Heart right ventricle (tissue), 16 donors: ENCODE measurements at regions of chr4 and their contacts with region 1.

Region 1: DNA sequence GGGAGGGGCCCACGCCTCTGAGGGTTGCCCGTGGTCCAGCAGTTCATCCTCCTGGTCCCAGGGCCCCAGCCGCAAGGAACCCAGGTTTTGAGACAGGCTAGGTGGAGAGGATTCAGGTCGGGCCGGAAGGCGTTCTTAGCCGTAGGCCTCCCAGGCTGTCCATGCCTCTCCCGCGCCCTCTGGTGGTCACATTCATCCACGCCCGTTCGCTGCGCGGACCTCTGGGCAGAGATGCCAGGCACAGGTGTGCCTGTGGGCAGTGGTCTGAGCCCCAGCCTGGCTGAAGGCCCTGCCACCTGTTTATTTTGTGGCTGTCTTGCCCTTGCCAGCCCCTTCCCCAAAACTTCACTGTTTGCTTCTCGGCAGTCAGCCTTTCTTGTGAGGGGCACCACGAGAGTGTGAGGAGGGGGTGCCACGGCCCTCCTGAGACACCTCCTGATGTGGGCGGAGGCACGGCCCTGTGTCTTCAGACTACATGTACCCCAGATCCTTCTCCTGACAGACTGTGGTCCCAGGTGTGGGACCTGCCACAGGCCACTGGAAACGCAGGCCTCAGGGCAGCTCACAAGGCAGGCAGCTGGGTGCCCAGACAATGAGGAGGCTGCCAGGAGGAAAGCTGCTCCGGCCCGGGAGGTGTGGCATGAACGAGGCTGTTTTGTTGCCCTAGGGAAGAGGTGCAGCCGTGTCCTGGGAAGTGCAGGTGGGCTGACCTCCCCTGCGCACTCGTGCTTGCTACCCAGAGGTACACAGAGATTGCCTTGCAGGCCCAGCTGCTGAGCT is 5.0 kb downstream of the UVSSA start:
- DNase-seq: peak; percentile 81 to 86
- ATAC-seq: peak in 5 of 8 donors; percentile 15 to 43 (median 37)
- H3K4me3 ChIP-seq: no peak overlapping the region
- H3K27ac ChIP-seq: peak overlapping the region in 2 of 10 donors; percentile 26 to 36
- H3K4me1 ChIP-seq: peaks cover 0 to 24% (median 13%) of the 10 kb centered on the region in 9 donors
- H3K27me3 ChIP-seq: no peaks in the 10 kb centered on the region
- CTCF ChIP-seq: peak; percentile 87 to 99 (median 94)

Region 2: DNA sequence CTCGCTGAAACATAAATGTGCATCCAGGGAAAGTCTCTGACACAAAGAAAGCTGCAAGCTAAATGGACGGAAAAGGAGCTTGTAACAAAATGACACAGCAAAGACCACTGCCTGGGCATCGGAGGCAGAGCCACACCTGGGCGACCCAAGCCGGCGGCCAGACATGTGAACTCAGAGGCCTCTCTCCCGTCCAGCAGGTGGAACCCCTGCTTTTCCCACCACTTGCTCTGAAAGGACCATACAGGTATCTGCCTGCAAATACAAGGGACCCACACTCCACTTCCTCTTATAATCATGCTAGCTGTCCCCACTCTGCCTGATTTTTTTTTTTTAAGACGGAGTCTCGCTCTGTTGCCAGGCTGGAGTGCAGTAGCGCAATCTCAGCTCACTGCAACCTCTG is 538.1 kb before region 1 on chr4:
- intact Hi-C with region 1: no loop called
- DNase-seq: no peak
- ATAC-seq: peak in 1 of 8 donors; percentile 31
- H3K4me3 ChIP-seq: no peak overlapping the region
- H3K27ac ChIP-seq: no peak overlapping the region
- H3K4me1 ChIP-seq: peaks cover 0 to 2% (median 0%) of the 10 kb centered on the region in 9 donors
- H3K27me3 ChIP-seq: peaks cover 0 to 72% (median 55%) of the 10 kb centered on the region in 7 donors
- CTCF ChIP-seq: peak in 3 of 9 donors; percentile 7 to 17 (median 12)

Region 3: DNA sequence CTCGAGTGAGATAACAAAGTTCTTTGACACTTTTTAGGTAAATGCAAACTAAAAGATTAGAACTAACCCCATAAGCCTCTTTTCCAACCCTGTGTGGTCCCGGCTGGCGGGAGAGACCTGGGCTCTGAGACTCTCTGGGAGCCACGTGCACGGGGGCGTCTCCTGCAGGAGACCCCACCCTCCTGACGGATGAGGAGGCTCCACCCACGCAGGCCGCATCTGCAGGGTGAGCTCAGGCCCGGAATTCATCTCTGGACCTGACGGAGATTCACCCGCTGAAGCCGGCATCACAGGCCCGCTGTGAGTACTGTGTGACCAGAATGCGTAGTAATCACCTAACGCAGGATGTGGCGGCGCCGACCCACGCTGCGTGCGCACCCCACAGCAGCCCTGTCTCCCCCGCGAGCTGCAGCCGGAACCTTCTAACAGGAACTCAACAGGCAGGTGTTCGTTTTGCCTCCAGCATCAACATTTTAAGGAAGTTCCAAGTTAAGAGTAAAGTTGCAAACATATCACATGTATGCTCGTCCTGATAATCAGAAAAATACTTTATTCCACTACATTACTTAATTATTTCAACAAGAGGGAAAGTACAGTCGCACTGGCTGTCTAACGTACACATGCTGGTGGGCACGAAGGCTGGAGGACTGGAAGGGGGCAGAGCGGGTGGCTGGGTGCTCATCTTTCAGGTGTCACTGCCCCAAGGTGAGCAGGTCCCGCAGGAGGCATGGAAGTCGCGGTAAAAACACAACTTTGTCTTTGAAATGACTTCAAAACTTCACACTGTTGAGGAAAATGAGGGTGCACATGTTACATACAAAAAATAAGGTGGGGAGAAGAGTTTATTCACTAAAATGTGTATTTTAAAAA is 296.1 kb before region 1 on chr4:
- intact Hi-C with region 1: no loop called
- DNase-seq: no peak
- ATAC-seq: peak; percentile 18 to 62 (median 40)
- H3K4me3 ChIP-seq: peak overlapping the region in 7 of 10 donors; percentile 22 to 43 (median 34)
- H3K27ac ChIP-seq: peak overlapping the region in 1 of 10 donors; percentile 56
- H3K4me1 ChIP-seq: peaks cover 0 to 22% (median 9%) of the 10 kb centered on the region in 9 donors
- H3K27me3 ChIP-seq: peaks cover 0 to 73% (median 52%) of the 10 kb centered on the region in 7 donors
- CTCF ChIP-seq: no peak

Region 4: DNA sequence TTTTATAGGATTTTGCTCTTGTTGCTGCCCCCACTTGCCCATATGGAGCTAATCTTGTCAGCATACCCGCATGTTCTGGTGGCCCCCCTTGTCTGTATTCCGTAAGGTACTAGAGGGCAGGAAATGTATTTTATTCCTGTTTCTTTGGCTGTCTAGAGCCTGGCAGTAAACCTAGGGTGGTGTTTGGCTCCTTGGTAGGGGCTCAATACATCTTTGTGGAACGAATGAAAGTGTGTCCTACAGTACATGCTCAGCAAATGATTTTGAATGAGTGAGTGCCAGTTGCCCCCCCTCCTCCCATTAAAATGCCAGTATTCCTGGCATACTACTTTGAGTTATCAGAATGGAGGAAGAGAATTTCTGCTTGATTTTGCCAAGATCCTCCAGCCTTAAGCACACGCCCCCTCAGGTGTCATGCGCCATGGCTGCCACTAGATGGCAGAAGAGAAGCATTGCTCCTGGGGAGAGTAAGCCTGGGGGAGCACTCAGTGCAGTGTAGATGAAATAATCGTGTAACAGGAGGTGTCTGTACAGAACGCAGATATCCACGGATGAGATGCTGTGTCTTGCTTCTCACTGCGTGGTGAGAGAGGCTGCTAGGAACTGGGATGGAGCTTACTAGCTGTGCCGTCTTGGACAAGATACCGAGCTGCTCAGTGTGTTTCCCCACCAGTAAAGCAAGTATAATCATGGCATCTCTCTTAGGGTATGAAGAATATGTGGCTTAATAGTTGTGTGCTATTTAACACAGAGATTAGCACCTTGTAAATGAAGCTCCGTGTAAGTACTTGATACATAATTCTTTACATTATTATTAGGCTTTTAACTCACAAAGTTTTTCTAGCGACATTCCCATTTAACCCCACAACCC is 221.5 kb before region 1 on chr4:
- intact Hi-C with region 1: loop called (anchors 1 to 10 kb)
- DNase-seq: peak; percentile 49 to 56
- ATAC-seq: peak; percentile 90 to 96 (median 95)
- H3K4me3 ChIP-seq: no peak overlapping the region
- H3K27ac ChIP-seq: no peak overlapping the region
- H3K4me1 ChIP-seq: peaks cover 0 to 6% (median 0%) of the 10 kb centered on the region in 9 donors
- H3K27me3 ChIP-seq: peaks cover 0 to 24% (median 5%) of the 10 kb centered on the region in 7 donors
- CTCF ChIP-seq: peak; percentile 97 to 100 (median 99)

Region 5: DNA sequence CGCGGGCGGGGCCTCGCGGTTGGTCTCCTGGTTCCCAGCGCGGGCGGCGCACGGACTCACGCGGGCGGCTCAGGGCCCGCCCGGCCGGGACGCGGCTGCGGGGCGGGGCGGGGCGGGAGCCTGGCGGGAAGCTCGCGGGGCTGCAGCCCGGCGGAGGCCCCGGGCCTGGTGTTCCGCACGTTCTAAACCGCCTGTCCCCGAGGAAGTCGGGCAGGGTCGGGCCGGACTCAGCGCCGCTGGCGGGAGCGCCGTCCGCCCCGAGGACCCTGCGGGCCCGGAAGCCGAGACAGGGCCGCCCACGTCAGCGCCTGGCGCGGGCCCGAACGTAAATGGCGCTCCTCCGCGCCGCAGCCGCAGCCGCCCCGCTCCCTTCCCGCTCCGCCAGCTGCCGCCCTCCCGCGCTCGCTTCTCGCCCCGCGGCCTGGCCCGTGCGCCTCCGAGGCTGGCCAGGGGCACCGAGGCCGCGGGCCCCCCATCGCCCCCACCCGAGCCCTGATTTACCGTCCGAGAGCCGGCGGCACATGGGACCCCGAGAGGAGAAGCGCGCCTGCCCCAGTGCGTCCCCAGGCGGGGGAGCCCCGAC is 102.8 kb before region 1 on chr4:
- intact Hi-C with region 1: loop called in 7 of 10 experiments (anchors 2 to 10 kb)
- DNase-seq: peak; percentile 85 to 89
- ATAC-seq: peak; percentile 40 to 75 (median 66)
- H3K4me3 ChIP-seq: peak overlapping the region; percentile 45 to 86 (median 78)
- H3K27ac ChIP-seq: peak overlapping the region; percentile 91 to 99 (median 98)
- H3K4me1 ChIP-seq: peaks cover 43 to 60% (median 51%) of the 10 kb centered on the region in 9 donors
- H3K27me3 ChIP-seq: no peaks in the 10 kb centered on the region
- CTCF ChIP-seq: peak in 1 of 9 donors; percentile 17

Region 6: DNA sequence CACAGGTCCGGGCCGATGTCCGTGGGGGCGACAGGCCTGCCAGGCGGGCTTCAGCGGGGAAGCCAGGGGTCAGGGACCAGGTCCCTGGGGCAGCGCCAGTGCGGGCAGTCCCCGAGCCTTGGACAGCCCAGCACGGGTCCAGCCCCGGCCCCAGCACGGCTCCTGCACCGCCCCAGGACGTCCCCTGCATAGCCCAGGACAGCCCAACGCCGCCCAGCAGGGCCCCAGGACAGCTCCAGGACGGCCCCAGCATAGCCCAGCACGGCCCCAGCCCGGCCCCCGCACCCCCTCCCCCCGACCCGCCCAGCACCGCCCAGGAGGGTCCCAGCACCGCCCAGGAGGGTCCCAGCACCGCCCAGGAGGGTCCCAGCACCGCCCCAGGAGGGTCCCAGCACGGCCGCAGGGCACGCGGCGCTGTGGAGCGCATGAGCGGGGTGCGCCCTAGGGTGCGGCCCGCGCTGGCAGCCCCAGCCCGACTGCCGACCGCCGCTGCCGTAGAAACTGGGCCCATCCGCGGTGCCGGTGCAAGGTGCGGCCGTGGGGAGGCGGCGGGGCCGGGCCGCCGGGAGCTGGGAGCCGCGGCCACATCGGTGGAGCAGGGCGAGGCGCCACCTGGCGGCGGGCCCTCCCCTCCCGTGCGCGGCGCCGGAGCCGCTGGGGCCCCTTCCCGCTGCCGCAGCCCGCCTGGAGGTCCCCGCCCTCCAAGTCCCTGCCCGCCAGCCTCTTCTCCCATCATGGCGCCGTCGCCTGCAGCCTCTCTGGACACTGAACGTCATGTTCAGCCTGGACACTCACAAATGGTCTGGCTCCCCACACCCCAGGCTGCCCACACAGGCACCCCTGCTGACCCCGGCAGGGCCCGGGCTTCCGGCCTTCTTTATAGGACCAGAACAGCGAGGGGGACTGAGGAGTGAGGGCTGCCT is 161.0 kb after region 1 on chr4:
- intact Hi-C with region 1: loop called in 7 of 10 experiments (anchors 2 to 10 kb)
- DNase-seq: peak in 1 of 2 donors; percentile 49
- ATAC-seq: peak; percentile 43 to 79 (median 76)
- H3K4me3 ChIP-seq: peak overlapping the region in 8 of 10 donors; percentile 6 to 34 (median 21)
- H3K27ac ChIP-seq: peak overlapping the region in 1 of 10 donors; percentile 18
- H3K4me1 ChIP-seq: peaks cover 0 to 8% (median 0%) of the 10 kb centered on the region in 9 donors
- H3K27me3 ChIP-seq: peaks cover 5 to 72% (median 52%) of the 10 kb centered on the region in 7 donors
- CTCF ChIP-seq: peak; percentile 48 to 74 (median 64)

Region 7: DNA sequence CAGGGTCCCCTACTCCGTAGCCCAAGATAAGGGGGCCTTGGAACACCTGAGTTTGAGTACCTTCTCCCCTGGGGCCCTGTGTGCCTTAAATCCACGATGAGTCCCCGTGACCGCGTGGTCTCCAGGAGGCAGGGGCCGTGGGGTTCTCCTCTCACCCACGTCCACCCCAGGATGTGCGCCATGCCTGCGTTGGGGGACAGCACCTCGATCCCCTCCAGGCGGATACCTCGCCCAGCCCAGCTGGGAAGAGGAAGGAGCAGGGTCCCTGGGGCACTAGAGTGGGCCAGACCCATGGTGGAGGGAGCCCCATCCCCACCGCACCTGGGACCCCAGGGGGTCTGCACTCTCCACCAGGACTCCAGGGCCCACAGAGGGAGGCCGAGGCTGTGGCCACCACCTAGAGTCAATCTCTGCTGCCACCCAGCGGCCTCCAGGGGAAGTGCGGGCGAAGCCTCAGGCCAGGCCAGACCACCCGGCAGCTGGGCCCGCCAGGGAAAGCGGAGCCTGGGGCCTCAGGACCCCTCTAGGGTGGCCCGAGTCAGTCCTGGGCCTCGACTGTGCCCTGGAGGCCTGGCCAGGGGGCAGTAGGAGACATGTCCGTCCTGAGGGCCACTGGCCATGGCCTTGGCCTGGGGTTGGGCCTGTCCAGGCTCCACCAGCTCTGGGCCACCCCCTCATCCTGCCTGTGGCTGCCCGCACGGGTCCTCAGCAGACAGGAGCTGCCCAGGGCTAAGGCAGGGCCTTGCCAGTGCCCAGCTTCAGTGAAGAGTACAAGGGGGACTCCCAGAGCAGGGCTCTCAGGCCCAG is 277.1 kb after region 1 on chr4:
- intact Hi-C with region 1: loop called (anchors 1 to 5 kb)
- DNase-seq: peak; percentile 39 to 62
- ATAC-seq: peak; percentile 44 to 81 (median 78)
- H3K4me3 ChIP-seq: no peak overlapping the region
- H3K27ac ChIP-seq: no peak overlapping the region
- H3K4me1 ChIP-seq: peaks cover 0 to 8% (median 0%) of the 10 kb centered on the region in 9 donors
- H3K27me3 ChIP-seq: peaks cover 0 to 7% (median 0%) of the 10 kb centered on the region in 7 donors
- CTCF ChIP-seq: peak; percentile 95 to 98 (median 98)

Region 8: GRCh38 chr4:1721004-1721665 is 369.1 kb after region 1 on chr4 and contains the starts of genes TACC3 and TMEM129:
- intact Hi-C with region 1: loop called in 8 of 10 experiments (anchors 5 to 10 kb)
- DNase-seq: peak; percentile 90 to 93
- ATAC-seq: peak; percentile 88 to 94 (median 92)
- H3K4me3 ChIP-seq: peak within 1 kb of the TSS; percentile 64 to 97 (median 84)
- H3K27ac ChIP-seq: peak within 1 kb of the TSS; percentile 92 to 99 (median 94)
- H3K4me1 ChIP-seq: peaks cover 23 to 70% (median 42%) of the 10 kb centered on the region in 9 donors
- H3K27me3 ChIP-seq: no peaks in the 10 kb centered on the region
- CTCF ChIP-seq: no peak
- total RNA-seq, gene TACC3: 2.3 to 15.6 (median 3.9) TPM
- total RNA-seq, gene TMEM129: 28.1 to 45.6 (median 34.3) TPM

Region 9: GRCh38 chr4:1726146-1726934 is 374.3 kb after region 1 on chr4:
- intact Hi-C with region 1: loop called in 8 of 10 experiments (anchors 5 to 10 kb)
- DNase-seq: peak; percentile 89
- ATAC-seq: peak in 7 of 8 donors; percentile 42 to 81 (median 61)
- H3K4me3 ChIP-seq: peak overlapping the region in 1 of 10 donors; percentile 9
- H3K27ac ChIP-seq: peak overlapping the region in 9 of 10 donors; percentile 63 to 87 (median 81)
- H3K4me1 ChIP-seq: peaks cover 13 to 82% (median 43%) of the 10 kb centered on the region in 9 donors
- H3K27me3 ChIP-seq: no peaks in the 10 kb centered on the region
- CTCF ChIP-seq: peak; percentile 97 to 99 (median 99)